Heart left ventricle (tissue), 16 donors: ENCODE measurements at regions of chr9 and their contacts with region 1.

Region 1: DNA sequence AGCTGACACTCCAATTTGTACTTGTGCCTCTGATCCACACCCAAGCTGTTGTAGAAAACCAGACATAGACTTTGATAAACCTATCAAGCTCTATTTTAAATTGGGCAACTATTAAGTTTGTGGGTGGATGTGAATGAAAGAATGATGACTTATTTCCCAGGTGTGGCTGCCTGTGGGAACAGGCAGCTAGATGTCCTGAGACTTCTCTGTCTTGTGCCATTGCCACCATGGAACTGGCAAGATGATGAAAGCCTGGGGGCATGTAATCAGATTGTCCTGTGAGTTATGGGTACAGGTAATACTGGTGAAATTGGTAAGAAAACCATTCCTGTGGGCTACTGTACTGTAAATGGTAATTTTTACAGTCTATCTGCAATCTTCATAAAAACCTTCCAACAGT is 57.5 kb downstream of the CEMIP2 start:
- DNase-seq: no peak
- ATAC-seq: no peak
- H3K4me3 ChIP-seq: no peak overlapping the region
- H3K27ac ChIP-seq: no peak overlapping the region
- H3K4me1 ChIP-seq: peaks cover 0 to under 1% (median 0%) of the 10 kb centered on the region in 12 donors
- H3K27me3 ChIP-seq: no peaks in the 10 kb centered on the region
- CTCF ChIP-seq: no peak
- POLR2A ChIP-seq: no peak

Region 2: DNA sequence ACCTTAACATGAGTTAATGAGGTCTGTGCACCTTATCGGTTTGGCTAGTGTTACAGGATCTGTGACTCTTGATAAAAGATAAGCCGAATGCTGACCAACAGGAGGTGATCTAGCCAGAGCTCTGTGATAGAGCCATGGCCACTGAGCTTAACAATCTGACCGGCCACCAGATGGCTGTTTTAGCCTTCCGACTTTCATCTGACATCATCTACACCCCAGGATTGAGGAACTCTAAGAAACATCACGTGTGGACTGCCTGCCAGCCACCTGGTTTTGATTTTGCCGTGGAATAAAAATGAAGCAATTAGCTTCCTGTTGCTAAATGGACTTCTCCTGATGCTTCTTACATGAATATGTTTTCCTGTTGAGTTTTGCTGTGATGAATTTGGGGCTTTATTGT is 223.8 kb before region 1 on chr9:
- intact Hi-C with region 1: no loop called
- DNase-seq: peak in 1 of 5 donors; percentile 21
- ATAC-seq: no peak
- H3K4me3 ChIP-seq: no peak overlapping the region
- H3K27ac ChIP-seq: no peak overlapping the region
- H3K4me1 ChIP-seq: no peaks in the 10 kb centered on the region
- H3K27me3 ChIP-seq: peaks cover 0 to 4% (median 0%) of the 10 kb centered on the region in 9 donors
- CTCF ChIP-seq: no peak
- POLR2A ChIP-seq: no peak

Region 3: DNA sequence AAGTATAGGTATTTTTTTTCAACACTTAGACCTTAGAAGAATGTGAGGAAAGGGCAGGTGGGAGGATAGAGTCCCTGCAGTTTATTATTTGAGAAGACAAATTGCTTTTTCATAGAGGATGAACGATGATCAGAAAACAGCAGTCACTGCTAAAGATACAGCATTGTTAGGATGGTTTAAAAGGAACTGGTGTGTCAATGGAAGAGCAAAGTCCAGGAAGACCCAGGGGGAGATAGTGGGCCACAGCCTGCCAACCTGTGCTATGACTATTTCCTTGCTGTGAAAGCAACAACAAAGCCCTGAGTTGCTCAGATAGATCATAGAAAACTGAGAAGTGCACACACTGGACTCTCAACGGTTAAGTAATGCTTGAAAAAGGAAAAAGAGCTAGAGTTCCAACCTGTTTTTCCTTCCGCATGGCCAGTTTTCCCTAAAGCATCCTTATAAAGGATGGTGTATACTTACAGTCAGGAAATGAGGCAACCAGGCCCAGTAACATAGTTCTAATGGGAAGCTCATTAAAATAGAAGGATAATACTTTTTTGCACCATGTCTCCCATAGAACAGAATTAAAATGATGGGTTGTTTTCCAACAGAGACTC is 96.3 kb before region 1 on chr9:
- intact Hi-C with region 1: loop called in 7 of 10 experiments (anchors 5 to 10 kb)
- DNase-seq: no peak
- ATAC-seq: no peak
- H3K4me3 ChIP-seq: no peak overlapping the region
- H3K27ac ChIP-seq: no peak overlapping the region
- H3K4me1 ChIP-seq: no peaks in the 10 kb centered on the region
- H3K27me3 ChIP-seq: no peaks in the 10 kb centered on the region
- CTCF ChIP-seq: no peak
- POLR2A ChIP-seq: no peak